Calu3 (cell line): ENCODE measurements at regions of chr6 and their contacts with region 1.

Region 1: GRCh38 chr6:133991096-133991593 is 38.1 kb downstream of the TBPL1 start:
- DNase-seq: no peak
- H3K4me3 Mint-ChIP-seq: no peak overlapping the region
- H3K27ac Mint-ChIP-seq: no peak overlapping the region
- H3K4me1 Mint-ChIP-seq: no peaks in the 10 kb centered on the region
- H3K27me3 Mint-ChIP-seq: no peaks in the 10 kb centered on the region
- CTCF ChIP-seq: no peak

Region 2: DNA sequence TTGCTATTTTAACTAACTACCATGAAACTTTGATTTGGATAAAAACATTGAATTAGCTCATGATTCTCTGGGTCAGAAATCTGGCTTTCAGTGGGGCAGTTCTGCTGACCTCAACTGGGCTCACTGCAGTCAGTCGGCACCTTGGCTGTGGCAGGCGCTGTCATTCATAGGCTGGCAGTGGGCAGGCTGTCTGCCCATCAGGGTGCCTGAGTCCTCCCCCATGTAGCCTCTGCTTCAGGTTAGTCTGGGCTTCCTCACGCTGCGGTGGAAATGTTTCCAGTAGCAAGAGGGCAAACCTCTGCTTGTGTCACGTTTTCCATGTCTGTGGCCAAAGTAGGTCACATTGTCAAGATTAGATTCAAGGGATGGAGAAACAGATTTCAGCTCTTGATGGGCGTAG is 353.3 kb before region 1 on chr6:
- CTCF ChIA-PET with region 1: no interaction called
- intact Hi-C with region 1: no loop called
- DNase-seq: no peak
- H3K4me3 Mint-ChIP-seq: no peak overlapping the region
- H3K27ac Mint-ChIP-seq: no peak overlapping the region
- H3K4me1 Mint-ChIP-seq: no peaks in the 10 kb centered on the region
- H3K27me3 Mint-ChIP-seq: no peaks in the 10 kb centered on the region
- CTCF ChIP-seq: no peak

Region 3: DNA sequence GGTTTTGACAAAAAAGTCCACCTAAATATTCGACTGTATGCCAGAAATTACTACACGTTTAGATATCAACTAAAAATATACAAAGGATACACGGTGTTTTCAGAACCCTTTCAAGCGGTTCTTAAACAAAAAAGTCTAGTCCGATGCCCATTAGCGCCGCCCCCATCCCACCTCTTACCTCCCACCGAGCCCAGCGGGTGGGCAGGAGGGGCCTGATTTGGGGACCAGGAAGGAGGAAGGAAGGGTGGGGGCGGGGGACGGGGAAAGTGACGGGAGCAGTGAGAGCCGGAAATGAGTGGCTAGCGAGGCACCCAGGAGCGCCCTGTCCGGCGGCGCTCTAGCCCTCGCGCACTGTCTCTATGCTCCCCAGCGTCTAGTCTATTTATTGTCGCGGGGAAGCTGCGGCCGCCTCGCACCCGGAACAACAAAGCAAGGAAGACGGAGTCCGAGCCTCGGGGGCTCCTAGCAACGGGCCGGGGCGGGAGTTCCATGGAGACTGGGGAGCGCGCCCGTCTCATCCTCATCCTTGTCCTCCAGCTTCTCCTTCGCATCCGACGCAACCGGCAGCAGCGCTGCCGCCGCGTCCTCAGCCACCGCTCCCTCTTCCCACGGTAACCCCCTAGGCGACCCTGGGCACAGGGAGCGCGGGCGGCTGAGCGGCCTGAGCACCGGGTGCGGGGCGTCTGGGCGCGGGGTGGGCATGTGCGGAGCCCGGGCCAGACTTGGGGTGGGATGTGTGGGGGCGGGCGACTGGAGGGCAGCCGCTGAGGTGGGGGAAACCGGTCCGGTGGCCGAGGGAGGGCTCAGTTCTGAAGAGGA is 38.1 kb before region 1 on chr6 and contains the start of gene TBPL1:
- CTCF ChIA-PET with region 1: no interaction called
- intact Hi-C with region 1: no loop called
- DNase-seq: peak; percentile 89
- H3K4me3 Mint-ChIP-seq: peak within 1 kb of the TSS; percentile 95
- H3K27ac Mint-ChIP-seq: peak within 1 kb of the TSS; percentile 81
- H3K4me1 Mint-ChIP-seq: peaks cover 32% of the 10 kb centered on the region
- H3K27me3 Mint-ChIP-seq: no peaks in the 10 kb centered on the region
- CTCF ChIP-seq: no peak
- total RNA-seq, gene TBPL1: 31.5 and 35.8 TPM in 2 replicates

Region 4: GRCh38 chr6:134035823-134036296 is 44.7 kb after region 1 on chr6:
- CTCF ChIA-PET with region 1: no interaction called
- intact Hi-C with region 1: loop called (anchors 2 kb)
- DNase-seq: peak; percentile 83
- H3K4me3 Mint-ChIP-seq: peak overlapping the region; percentile 31
- H3K27ac Mint-ChIP-seq: peak overlapping the region; percentile 99
- H3K4me1 Mint-ChIP-seq: peaks cover 72% of the 10 kb centered on the region
- H3K27me3 Mint-ChIP-seq: no peaks in the 10 kb centered on the region
- CTCF ChIP-seq: no peak